Activated CD4-positive, alpha-beta memory T cell treated with anti-CD3 and anti-CD28 coated beads for 36 hours (primary cell): ENCODE measurements at regions of chr19 and their contacts with region 1.

Region 1: DNA sequence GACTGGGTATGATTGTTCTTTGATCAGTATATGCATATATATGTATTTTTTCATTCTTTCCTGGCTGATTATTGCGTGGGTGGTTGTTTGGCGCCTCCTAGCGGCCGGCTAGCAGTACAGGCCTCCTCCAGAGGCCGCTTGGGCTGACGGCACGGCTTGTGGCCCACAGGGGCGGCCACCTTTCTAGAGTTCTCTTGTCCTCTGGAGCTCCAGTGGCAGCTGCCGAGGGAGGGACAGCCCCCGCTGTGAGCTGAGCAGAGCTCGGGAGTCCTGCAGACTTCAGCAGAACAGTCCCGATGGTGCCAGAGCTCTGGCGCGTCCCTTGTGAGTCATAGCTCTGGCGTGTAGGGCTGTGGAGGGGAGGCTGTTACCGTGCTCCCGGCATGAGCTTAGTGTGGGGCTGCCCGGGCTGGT is 22.5 kb upstream of the ZNF429 start:
- DNase-seq: peak; percentile 81
- H3K4me3 Mint-ChIP-seq: peak overlapping the region; percentile 26
- H3K27ac Mint-ChIP-seq: peak overlapping the region; percentile 38
- H3K4me1 Mint-ChIP-seq: peaks cover 2% of the 10 kb centered on the region
- H3K27me3 Mint-ChIP-seq: no peaks in the 10 kb centered on the region

Region 2: DNA sequence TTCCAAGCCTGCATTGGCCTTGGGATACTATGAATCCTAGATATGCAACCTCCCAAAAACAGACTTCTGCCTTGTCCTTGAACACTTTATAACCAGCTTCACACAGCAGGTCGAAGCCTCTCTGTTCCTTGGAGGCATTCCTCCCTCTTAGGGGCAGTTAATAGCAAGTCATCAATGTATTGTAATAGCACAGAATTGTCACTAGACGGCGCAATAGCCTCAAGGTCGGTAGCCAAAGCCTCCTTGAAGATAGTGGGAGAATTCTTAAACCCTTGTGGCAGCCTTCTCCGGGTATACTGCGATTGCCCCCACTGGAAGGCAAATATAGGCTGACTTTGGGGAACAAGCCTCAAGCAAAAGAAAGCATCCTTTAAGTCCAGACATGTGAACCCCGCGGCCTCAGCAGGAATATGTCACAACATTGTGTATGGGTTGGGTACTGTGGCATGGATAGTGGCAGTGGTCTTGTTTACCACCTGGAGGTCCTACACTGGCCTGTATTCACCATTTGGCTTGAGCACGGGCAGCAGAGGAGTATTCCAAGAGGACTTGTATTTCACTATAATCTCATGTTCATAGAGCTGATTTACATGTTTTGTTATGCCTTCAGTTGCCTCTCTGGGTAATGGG is 279.9 kb before region 1 on chr19:
- CTCF ChIA-PET with region 1: interaction called, 13 read pairs
- POLR2A ChIA-PET with region 1: no interaction called
- intact Hi-C with region 1: loop called (anchors 1 kb)
- DNase-seq: peak; percentile 36
- H3K4me3 Mint-ChIP-seq: no peak overlapping the region
- H3K27ac Mint-ChIP-seq: no peak overlapping the region
- H3K4me1 Mint-ChIP-seq: no peaks in the 10 kb centered on the region
- H3K27me3 Mint-ChIP-seq: peaks cover 1% of the 10 kb centered on the region

Region 3: GRCh38 chr19:21423057-21424041 is 59.5 kb before region 1 on chr19:
- CTCF ChIA-PET with region 1: no interaction called
- POLR2A ChIA-PET with region 1: no interaction called
- intact Hi-C with region 1: no loop called
- DNase-seq: no peak
- H3K4me3 Mint-ChIP-seq: no peak overlapping the region
- H3K27ac Mint-ChIP-seq: no peak overlapping the region
- H3K4me1 Mint-ChIP-seq: no peaks in the 10 kb centered on the region
- H3K27me3 Mint-ChIP-seq: no peaks in the 10 kb centered on the region

Region 4: DNA sequence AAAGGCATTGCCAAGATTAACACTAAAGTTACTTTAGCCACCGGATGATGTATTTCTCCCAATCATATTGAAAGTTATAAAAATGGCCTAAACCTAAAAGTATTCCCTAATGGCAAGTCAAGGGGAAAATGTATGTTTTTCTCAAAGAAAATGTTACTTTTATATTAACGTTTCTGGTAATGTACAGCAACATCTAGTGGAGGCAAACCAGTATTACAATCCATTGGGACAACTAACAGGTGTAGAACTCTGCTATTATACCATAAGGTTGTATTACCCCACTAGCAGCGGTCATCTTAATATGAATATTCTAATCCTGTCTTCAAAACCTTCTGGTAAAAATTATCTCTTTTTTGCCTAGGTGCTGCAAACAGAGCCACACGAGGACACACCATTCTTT is 215.3 kb after region 1 on chr19:
- CTCF ChIA-PET with region 1: interaction called, 21 read pairs
- POLR2A ChIA-PET with region 1: no interaction called
- intact Hi-C with region 1: loop called (anchors 1 kb)
- DNase-seq: no peak
- H3K4me3 Mint-ChIP-seq: no peak overlapping the region
- H3K27ac Mint-ChIP-seq: no peak overlapping the region
- H3K4me1 Mint-ChIP-seq: no peaks in the 10 kb centered on the region
- H3K27me3 Mint-ChIP-seq: no peaks in the 10 kb centered on the region